MCF 10A (cell line): ENCODE measurements at regions of chr1 and their contacts with region 1.

Region 1: DNA sequence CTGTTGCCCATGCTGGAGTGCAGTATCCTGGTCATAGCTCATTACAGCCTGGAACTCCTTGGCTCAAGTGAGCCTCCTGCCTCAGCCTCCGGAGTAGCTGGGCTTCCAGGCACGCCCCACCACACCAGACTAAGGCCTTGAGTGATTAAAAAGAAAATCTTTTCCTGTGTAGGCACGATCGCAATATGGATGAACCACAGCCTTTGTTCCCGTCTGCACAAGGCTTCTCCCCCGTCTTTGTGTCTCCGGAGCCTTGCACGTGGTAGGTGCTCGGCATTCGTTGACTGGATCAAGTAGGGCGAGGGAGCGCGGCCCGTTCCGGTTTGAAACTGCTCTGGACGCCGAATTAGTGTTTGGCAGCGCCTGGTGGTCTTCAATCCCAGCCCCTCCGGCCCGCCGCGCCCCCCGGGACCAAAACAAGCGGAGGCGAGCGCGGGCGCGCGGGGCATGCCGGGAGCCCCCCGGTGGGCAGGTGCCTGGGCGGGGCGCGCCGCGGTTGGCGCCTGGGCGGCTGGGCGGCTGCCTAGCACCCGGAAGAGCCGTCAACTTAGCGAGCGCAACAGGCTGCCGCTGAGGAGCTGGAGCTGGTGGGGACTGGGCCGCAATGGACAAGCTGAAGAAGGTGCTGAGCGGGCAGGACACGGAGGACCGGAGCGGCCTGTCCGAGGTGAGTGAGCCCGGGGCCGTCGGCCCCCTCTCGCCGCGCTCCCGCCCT is at the start of gene SFT2D2:
- DNase-seq: peak; percentile 86
- H3K4me3 Mint-ChIP-seq: peak within 1 kb of the TSS; percentile 88
- H3K27ac Mint-ChIP-seq: peak within 1 kb of the TSS; percentile 93
- H3K4me1 Mint-ChIP-seq: peaks cover 49% of the 10 kb centered on the region
- H3K27me3 Mint-ChIP-seq: no peaks in the 10 kb centered on the region
- CTCF ChIP-seq: no peak
- total RNA-seq, gene SFT2D2: 56.5 and 67.5 TPM in 2 replicates

Region 2: DNA sequence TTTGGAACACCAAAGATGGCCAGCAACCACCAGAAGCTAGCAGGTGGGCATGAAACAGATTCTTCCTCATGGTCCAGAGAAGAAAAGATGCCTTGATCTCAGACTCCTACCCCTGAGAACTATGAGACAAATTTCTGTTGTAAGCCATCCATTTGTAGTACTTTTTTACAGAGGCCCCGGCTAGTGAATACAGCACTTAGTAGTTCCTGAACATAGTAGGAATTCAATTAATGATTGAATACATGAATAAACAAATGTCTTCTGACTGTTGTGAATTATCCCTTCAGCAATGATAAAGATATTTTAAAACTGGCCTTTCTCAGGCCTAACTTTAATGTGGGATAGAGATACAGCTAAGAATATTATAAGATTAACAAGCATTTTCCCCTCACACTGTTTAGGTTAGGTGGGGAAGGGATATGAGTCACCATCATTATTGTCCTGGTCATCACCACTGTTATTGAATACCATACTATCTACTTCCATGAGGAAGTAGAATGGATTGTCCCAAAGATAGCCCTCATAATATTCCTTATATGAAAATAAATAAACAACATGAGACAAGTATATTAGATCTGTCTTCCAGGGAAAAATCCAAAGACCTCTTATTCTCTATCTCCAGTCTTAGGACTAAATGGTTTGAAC is 363.1 kb before region 1 on chr1:
- CTCF ChIA-PET with region 1: no interaction called
- POLR2A ChIA-PET with region 1: no interaction called
- intact Hi-C with region 1: no loop called
- DNase-seq: no peak
- H3K4me3 Mint-ChIP-seq: no peak overlapping the region
- H3K27ac Mint-ChIP-seq: no peak overlapping the region
- H3K4me1 Mint-ChIP-seq: no peaks in the 10 kb centered on the region
- H3K27me3 Mint-ChIP-seq: no peaks in the 10 kb centered on the region
- CTCF ChIP-seq: no peak

Region 3: GRCh38 chr1:168112673-168113305 is 112.8 kb before region 1 on chr1:
- CTCF ChIA-PET with region 1: no interaction called
- POLR2A ChIA-PET with region 1: interaction called, 5 read pairs
- intact Hi-C with region 1: loop called (anchors 5 kb)
- DNase-seq: peak; percentile 100
- H3K4me3 Mint-ChIP-seq: peak overlapping the region; percentile 7
- H3K27ac Mint-ChIP-seq: peak overlapping the region; percentile 32
- H3K4me1 Mint-ChIP-seq: peaks cover 53% of the 10 kb centered on the region
- H3K27me3 Mint-ChIP-seq: no peaks in the 10 kb centered on the region
- CTCF ChIP-seq: no peak

Region 4: DNA sequence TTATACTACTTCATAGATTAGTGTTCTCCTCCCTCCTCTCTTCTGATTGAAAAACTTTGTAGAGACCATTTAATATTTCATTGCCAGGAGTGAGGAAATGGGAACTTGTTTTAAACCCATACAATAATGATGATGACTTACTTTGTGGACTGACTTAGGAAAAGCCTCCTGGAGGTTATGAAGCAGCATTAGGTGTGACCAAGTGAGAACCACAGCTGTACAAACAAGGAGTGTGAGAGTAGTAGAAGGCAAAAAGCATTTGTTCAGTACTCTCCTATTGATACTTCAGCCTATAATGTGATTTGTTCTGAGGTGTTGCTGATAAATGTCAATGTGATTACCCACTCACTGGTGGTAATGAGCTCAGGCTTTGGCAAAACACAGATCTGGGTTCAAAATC is 38.5 kb before region 1 on chr1:
- CTCF ChIA-PET with region 1: no interaction called
- POLR2A ChIA-PET with region 1: interaction called, 93 read pairs
- intact Hi-C with region 1: no loop called
- DNase-seq: no peak
- H3K4me3 Mint-ChIP-seq: no peak overlapping the region
- H3K27ac Mint-ChIP-seq: peak overlapping the region; percentile 4
- H3K4me1 Mint-ChIP-seq: peaks cover 9% of the 10 kb centered on the region
- H3K27me3 Mint-ChIP-seq: no peaks in the 10 kb centered on the region
- CTCF ChIP-seq: no peak

Region 5: GRCh38 chr1:168252204-168252733 is 26.6 kb after region 1 on chr1:
- CTCF ChIA-PET with region 1: no interaction called
- POLR2A ChIA-PET with region 1: interaction called, 12 read pairs
- intact Hi-C with region 1: no loop called
- DNase-seq: no peak
- H3K4me3 Mint-ChIP-seq: no peak overlapping the region
- H3K27ac Mint-ChIP-seq: no peak overlapping the region
- H3K4me1 Mint-ChIP-seq: no peaks in the 10 kb centered on the region
- H3K27me3 Mint-ChIP-seq: no peaks in the 10 kb centered on the region
- CTCF ChIP-seq: no peak

Region 6: DNA sequence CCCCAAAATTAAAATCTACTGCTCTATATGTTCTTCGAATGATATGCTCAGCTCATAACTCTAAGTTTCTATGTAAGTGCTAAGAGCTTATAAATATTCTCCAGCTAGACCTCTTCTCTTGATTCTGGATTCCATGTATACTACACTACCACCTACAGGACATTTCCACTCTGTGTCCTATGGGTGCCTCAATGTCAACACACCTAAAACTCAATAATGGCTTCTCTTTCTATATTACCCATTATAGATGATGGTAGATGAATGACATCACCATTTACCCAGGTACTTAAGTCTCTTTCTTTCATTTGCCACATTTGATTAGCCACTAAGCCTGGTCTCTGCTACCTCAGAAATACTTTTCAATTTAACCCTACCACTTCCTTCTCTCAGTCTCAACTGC is 96.3 kb after region 1 on chr1:
- CTCF ChIA-PET with region 1: interaction called, 10 read pairs
- POLR2A ChIA-PET with region 1: interaction called, 16 read pairs
- intact Hi-C with region 1: no loop called
- DNase-seq: peak; percentile 76
- H3K4me3 Mint-ChIP-seq: no peak overlapping the region
- H3K27ac Mint-ChIP-seq: no peak overlapping the region
- H3K4me1 Mint-ChIP-seq: peaks cover 13% of the 10 kb centered on the region
- H3K27me3 Mint-ChIP-seq: no peaks in the 10 kb centered on the region
- CTCF ChIP-seq: peak; percentile 52